ENCODE measurements at regions of chr3 and their contacts with region 1.

Region 1: GRCh38 chr3:46909535-46910442 is 32.3 kb downstream of the PTH1R start:
- DNase-seq: peak; percentile 94
- H3K4me3 ChIP-seq: peak overlapping the region in 1 of 2 experiments; percentile 30; a peak in 1 of 4 replicates
- H3K27ac ChIP-seq: no peak overlapping the region
- H3K4me1 ChIP-seq: peaks cover 11 to 19% of the 10 kb centered on the region in 2 experiments
- H3K27me3 ChIP-seq: no peaks in the 10 kb centered on the region
- CTCF ChIP-seq: peak; percentile 86
- EP300 ChIP-seq: no peak
- RAD21 ChIP-seq: peak; percentile 97

Region 2: DNA sequence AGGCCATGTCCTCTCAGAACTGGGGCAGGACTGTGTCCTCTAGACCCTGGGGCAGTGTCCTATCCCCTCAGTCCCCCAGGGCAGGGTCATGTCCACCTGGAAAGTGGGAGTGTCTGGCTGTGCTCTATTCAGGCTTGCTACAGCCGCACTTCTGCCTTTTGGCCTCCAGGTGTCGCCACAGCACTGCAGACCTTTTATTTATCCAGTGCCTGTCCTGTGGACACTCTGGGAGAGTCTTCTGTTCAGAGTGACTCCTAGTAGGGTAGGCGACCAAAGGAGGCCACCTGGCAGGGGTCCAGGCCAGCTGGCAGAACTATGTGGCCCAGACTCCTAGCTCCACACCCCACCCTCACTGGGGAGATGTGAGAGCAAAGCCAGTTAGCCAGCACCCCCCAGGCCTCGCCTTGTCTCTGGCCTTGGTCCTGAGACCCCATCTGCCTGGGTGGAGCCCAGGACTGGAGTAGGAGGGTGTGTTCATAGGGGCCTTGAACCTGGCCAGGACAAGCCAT is 204.7 kb before region 1 on chr3:
- CTCF ChIA-PET with region 1: interaction called, 52 read pairs
- POLR2A ChIA-PET with region 1: interaction called, 3 read pairs
- DNase-seq: peak; percentile 81
- H3K4me3 ChIP-seq: no peak overlapping the region; a peak in 1 of 4 replicates
- H3K27ac ChIP-seq: no peak overlapping the region
- H3K4me1 ChIP-seq: peaks cover 0 to 32% of the 10 kb centered on the region in 2 experiments; a peak in 1 of 4 replicates
- H3K27me3 ChIP-seq: peaks cover 14% of the 10 kb centered on the region
- CTCF ChIP-seq: peak; percentile 94
- EP300 ChIP-seq: no peak
- RAD21 ChIP-seq: peak; percentile 97

Region 3: DNA sequence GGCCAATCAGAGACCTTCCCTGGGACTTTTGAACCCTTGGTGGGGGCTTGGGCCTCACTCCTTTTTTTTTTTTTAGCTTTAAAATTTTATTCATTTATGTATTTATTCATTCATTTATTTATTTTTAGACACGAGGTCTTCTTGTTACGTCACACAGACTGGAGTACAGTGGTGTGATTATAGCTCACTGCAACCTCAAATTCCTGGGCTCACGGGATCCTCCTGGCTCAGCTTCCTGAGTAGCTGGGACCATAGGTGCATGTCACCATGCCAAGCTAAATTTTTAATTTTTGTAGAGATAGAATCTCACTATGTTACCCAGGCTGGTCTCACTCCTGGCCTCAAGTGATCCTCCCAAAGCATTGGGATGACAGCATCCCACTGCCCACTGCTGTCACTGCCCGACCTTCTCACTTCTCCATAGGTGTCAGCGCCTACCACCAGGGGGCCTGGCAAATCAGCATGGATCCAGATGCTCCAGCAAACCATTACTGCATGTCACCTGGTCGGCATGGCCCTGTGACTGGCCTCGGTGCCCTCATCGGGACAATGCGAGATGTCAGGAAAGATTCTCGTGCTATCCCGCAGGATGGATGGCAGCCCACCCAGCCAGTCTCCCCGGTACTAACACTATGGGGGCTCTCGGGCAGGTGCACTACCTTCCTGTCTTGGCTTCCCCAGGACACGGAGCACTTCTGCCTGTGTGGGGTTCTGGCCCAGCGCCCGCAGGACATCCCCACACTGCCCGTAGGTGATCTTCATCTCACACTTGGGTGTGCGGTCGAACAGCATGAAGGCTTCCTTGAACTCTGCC is 49.6 kb before region 1 on chr3:
- CTCF ChIA-PET with region 1: interaction called, 480 read pairs
- POLR2A ChIA-PET with region 1: interaction called, 3 read pairs
- DNase-seq: no peak
- H3K4me3 ChIP-seq: no peak overlapping the region
- H3K27ac ChIP-seq: no peak overlapping the region
- H3K4me1 ChIP-seq: peaks cover 0 to 15% of the 10 kb centered on the region in 2 experiments; a peak in 1 of 4 replicates
- H3K27me3 ChIP-seq: peaks cover 7% of the 10 kb centered on the region; the same call in 1 of the 2 replicates
- CTCF ChIP-seq: peak; percentile 52; the same call in 1 of the 2 replicates
- EP300 ChIP-seq: no peak
- RAD21 ChIP-seq: peak; percentile 40

Region 4: GRCh38 chr3:46882377-46883053 is 27.3 kb before region 1 on chr3:
- CTCF ChIA-PET with region 1: interaction called, 480 read pairs
- POLR2A ChIA-PET with region 1: interaction called, 3 read pairs
- DNase-seq: peak; percentile 82
- H3K4me3 ChIP-seq: peak overlapping the region; percentile 44 to 64
- H3K27ac ChIP-seq: no peak overlapping the region
- H3K4me1 ChIP-seq: peaks cover 0 to 20% of the 10 kb centered on the region in 2 experiments; a peak in 1 of 4 replicates
- H3K27me3 ChIP-seq: peaks cover 22% of the 10 kb centered on the region
- CTCF ChIP-seq: no peak
- EP300 ChIP-seq: no peak
- RAD21 ChIP-seq: no peak

Region 5: GRCh38 chr3:46935168-46935858 is 25.5 kb after region 1 on chr3:
- CTCF ChIA-PET with region 1: interaction called, 15 read pairs
- POLR2A ChIA-PET with region 1: interaction called, 4 read pairs
- DNase-seq: peak; percentile 64
- H3K4me3 ChIP-seq: no peak overlapping the region
- H3K27ac ChIP-seq: peak overlapping the region; percentile 89 to 91
- H3K4me1 ChIP-seq: peaks cover 53 to 54% of the 10 kb centered on the region in 2 experiments
- H3K27me3 ChIP-seq: no peaks in the 10 kb centered on the region
- CTCF ChIP-seq: peak; percentile 82
- EP300 ChIP-seq: peak; percentile 50 to 75; a peak in 2 of 4 replicates
- RAD21 ChIP-seq: peak; percentile 39; the same call in 1 of the 2 replicates

Region 6: DNA sequence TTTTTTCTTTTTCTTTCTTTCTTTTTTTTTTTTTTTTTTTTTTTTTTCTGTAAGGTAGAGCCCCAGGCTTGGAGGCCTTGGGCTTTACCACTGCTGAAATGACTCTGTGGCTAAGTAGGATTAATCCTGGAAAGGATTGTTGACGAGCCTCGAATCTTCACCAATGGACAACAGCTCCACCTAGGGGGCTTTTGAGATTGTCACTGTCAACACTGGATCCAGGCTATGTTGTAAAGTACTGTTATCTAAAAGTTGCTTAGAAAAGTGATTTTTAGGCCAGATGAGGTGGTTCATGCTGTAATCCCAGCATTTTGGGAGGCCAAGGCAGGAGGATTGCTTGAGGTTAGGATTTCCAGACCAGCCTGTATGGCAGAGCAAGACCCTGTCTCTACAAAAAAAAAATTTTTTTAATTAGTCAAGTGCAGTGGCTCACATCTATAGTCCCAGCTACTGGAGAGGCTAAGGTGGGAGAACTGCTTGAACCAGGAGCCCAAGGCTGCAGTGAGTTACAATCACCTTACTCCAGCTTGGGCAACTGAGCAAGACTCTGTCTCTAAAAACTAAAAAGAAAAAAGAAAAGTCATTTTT is 414.6 kb after region 1 on chr3:
- CTCF ChIA-PET with region 1: interaction called, 14 read pairs
- POLR2A ChIA-PET with region 1: no interaction called
- DNase-seq: peak; percentile 79
- H3K4me3 ChIP-seq: no peak overlapping the region; a peak in 1 of 4 replicates
- H3K27ac ChIP-seq: no peak overlapping the region
- H3K4me1 ChIP-seq: no peaks in the 10 kb centered on the region
- H3K27me3 ChIP-seq: no peaks in the 10 kb centered on the region
- CTCF ChIP-seq: peak; percentile 79
- EP300 ChIP-seq: no peak
- RAD21 ChIP-seq: peak; percentile 88

Measured in SK-N-SH (cell line).